ENCODE measurements at regions of chr7 and their contacts with region 1.

Region 1: GRCh38 chr7:55018361-55019190 is at the start of gene EGFR:
- DNase-seq: peak; percentile 75 to 78
- ATAC-seq: peak; percentile 86
- H3K4me3 ChIP-seq: peak within 1 kb of the TSS; percentile 95
- H3K27ac ChIP-seq: peak within 1 kb of the TSS; percentile 97 to 98
- H3K4me1 ChIP-seq: peaks cover 32% of the 10 kb centered on the region
- CTCF ChIP-seq: no peak
- EP300 ChIP-seq: no peak
- POLR2A ChIP-seq: peak; percentile 72
- RAD21 ChIP-seq: peak; percentile 9 to 38; a peak in 3 of 5 replicates
- polyA plus RNA-seq, gene EGFR: 59.5 and 61.4 TPM in 2 replicates

Region 2: DNA sequence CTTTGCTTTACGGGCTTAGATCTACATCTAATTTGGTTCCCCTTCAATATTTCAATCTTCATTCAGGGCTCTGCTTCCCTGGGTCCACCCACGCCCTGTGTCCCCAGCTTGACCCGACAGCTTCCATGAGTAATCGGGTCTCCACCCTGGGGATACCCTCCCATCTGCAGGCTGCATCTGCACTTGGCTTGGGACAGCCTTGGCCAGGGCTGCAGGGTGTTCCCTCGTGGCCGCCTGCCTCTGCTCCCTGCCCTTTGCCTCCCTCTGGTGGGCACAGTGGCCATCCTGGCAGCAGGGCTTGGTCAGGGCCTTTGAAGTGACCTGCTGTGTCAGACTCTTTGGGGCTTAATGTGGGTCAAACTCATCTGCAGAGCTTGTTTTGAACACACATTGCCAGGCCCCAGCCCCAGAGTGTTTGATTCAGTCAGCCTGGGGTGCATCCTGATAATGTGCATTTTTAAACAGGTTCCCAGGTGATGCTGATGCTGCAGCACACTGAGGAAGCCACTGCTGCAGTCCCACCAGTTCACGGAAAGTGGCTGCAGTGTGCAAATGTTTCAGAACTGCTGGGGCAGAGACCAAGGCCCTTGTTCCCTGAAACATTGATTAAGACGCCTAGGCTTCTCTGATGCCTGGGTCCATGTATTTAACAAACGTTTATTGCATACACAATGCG is 178.9 kb before region 1 on chr7:
- CTCF ChIA-PET with region 1: interaction called, 10 read pairs
- POLR2A ChIA-PET with region 1: no interaction called
- DNase-seq: peak; percentile 80 to 81
- ATAC-seq: peak; percentile 99
- H3K4me3 ChIP-seq: no peak overlapping the region
- H3K27ac ChIP-seq: peak overlapping the region; percentile 65 to 71
- H3K4me1 ChIP-seq: peaks cover 52% of the 10 kb centered on the region
- CTCF ChIP-seq: peak; percentile 83
- EP300 ChIP-seq: no peak
- POLR2A ChIP-seq: no peak
- RAD21 ChIP-seq: peak; percentile 94 to 97

Region 3: DNA sequence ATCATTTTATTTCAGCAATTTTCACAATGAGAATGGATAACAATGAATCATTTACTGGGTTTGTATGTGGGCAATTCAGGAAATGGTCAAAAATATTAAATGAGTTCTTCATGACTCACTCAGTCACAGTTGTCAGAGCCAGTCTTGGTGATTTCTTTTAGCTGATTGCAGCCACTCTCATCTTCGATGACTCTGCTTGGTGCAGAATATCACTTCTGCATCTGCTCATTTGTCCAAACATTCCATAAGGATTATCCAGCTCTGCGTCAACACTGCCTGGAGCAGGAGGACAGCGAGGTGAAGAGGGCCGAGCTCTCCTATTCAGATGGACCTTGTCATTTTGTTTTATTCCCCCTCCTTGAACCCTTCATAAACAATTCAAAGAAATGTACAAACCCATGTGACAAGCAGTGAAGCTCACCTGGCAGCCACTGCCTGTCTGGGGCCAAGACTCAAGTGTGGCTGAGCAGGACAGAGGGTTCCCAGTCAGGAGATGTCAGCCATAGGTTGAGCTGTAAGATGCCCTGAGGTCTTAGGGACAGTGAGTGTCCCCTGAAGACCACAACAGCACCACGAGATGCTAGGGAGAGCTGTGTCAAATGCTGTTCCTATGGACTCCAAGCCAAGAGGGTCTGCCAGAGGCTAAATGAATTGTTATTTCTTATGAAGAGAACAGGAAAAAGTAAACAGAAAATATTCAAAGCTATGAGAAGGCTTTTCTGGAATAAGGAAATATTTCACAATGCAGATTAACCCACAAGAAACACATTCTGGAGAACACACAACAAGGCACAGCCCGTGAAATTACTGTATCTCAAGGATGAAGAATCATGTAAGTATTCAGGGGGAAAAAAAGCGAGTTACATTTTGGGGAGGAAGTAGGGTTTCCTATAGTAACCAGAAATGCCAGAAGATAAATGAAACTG is 32.9 kb before region 1 on chr7:
- CTCF ChIA-PET with region 1: interaction called, 4 read pairs
- POLR2A ChIA-PET with region 1: interaction called, 24 read pairs
- DNase-seq: peak; percentile 70 to 90
- ATAC-seq: peak; percentile 97
- H3K4me3 ChIP-seq: peak overlapping the region; percentile 6; the same call in 1 of the 3 replicates
- H3K27ac ChIP-seq: peak overlapping the region; percentile 87 to 91
- H3K4me1 ChIP-seq: peaks cover 50% of the 10 kb centered on the region
- CTCF ChIP-seq: no peak
- EP300 ChIP-seq: peak; percentile 80 to 81; a peak in 3 of 5 replicates
- POLR2A ChIP-seq: no peak
- RAD21 ChIP-seq: peak; percentile 40 to 54

Region 4: GRCh38 chr7:54995631-54996340 is 22.8 kb before region 1 on chr7:
- CTCF ChIA-PET with region 1: interaction called, 6 read pairs
- POLR2A ChIA-PET with region 1: interaction called, 13 read pairs
- DNase-seq: peak; percentile 74 to 85
- ATAC-seq: peak; percentile 92 to 95
- H3K4me3 ChIP-seq: no peak overlapping the region
- H3K27ac ChIP-seq: peak overlapping the region; percentile 81 to 86
- H3K4me1 ChIP-seq: peaks cover 37% of the 10 kb centered on the region
- CTCF ChIP-seq: no peak
- EP300 ChIP-seq: peak; percentile 77 to 89; a peak in 3 of 5 replicates
- POLR2A ChIP-seq: no peak
- RAD21 ChIP-seq: peak; percentile 1 to 48; a peak in 2 of 5 replicates

Measured in A549 (cell line).